ENCODE measurements at regions of chr9 and their contacts with region 1.

Region 1: GRCh38 chr9:96667361-96667728 is 12.2 kb upstream of the PRXL2C start:
- DNase-seq: no peak
- H3K4me3 ChIP-seq: no peak overlapping the region
- H3K27ac ChIP-seq: no peak overlapping the region
- H3K4me1 ChIP-seq: no peaks in the 10 kb centered on the region
- H3K27me3 ChIP-seq: no peaks in the 10 kb centered on the region
- CTCF ChIP-seq: no peak

Region 2: GRCh38 chr9:96391021-96391765 is 276.2 kb before region 1 on chr9:
- CTCF ChIA-PET with region 1: no interaction called
- dilution Hi-C with region 1: no loop called
- in situ Hi-C with region 1: no loop called
- intact Hi-C with region 1: no loop called
- DNase-seq: no peak
- H3K4me3 ChIP-seq: no peak overlapping the region
- H3K27ac ChIP-seq: no peak overlapping the region
- H3K4me1 ChIP-seq: no peaks in the 10 kb centered on the region
- H3K27me3 ChIP-seq: no peaks in the 10 kb centered on the region
- CTCF ChIP-seq: no peak

Region 3: GRCh38 chr9:96441798-96442445 is 225.4 kb before region 1 on chr9:
- CTCF ChIA-PET with region 1: no interaction called
- dilution Hi-C with region 1: no loop called
- in situ Hi-C with region 1: loop called in 1 of 2 experiments (anchors 25 kb)
- intact Hi-C with region 1: loop called (anchors 1 kb)
- DNase-seq: peak; percentile 40
- H3K4me3 ChIP-seq: no peak overlapping the region
- H3K27ac ChIP-seq: no peak overlapping the region
- H3K4me1 ChIP-seq: no peaks in the 10 kb centered on the region
- H3K27me3 ChIP-seq: no peaks in the 10 kb centered on the region
- CTCF ChIP-seq: peak; percentile 61 to 63